Activated B cell treated with CpG ODN at 0.5 μM for 24 hours (primary cell): ENCODE measurements at regions of chr1 and their contacts with region 1.

Region 1: GRCh38 chr1:171485375-171486047 is at the start of gene PRRC2C:
- DNase-seq: peak; percentile 81
- ATAC-seq: peak; percentile 86
- H3K4me3 Mint-ChIP-seq: peak within 1 kb of the TSS; percentile 94
- H3K27ac Mint-ChIP-seq: peak within 1 kb of the TSS; percentile 94
- H3K4me1 Mint-ChIP-seq: peaks cover 56% of the 10 kb centered on the region
- H3K27me3 Mint-ChIP-seq: no peaks in the 10 kb centered on the region
- CTCF ChIP-seq: no peak
- total RNA-seq, gene PRRC2C: 262 and 272 TPM in 2 replicates

Region 2: GRCh38 chr1:169794530-169795416 is 1690.7 kb before region 1 on chr1 and contains the start of gene METTL18:
- CTCF ChIA-PET with region 1: no interaction called
- POLR2A ChIA-PET with region 1: no interaction called
- intact Hi-C with region 1: loop called (anchors 1 kb)
- DNase-seq: peak; percentile 77
- ATAC-seq: peak; percentile 98
- H3K4me3 Mint-ChIP-seq: peak within 1 kb of the TSS; percentile 100
- H3K27ac Mint-ChIP-seq: peak within 1 kb of the TSS; percentile 99
- H3K4me1 Mint-ChIP-seq: peaks cover 50% of the 10 kb centered on the region
- H3K27me3 Mint-ChIP-seq: no peaks in the 10 kb centered on the region
- CTCF ChIP-seq: no peak
- total RNA-seq, gene METTL18: 12.0 and 14.5 TPM in 2 replicates

Region 3: DNA sequence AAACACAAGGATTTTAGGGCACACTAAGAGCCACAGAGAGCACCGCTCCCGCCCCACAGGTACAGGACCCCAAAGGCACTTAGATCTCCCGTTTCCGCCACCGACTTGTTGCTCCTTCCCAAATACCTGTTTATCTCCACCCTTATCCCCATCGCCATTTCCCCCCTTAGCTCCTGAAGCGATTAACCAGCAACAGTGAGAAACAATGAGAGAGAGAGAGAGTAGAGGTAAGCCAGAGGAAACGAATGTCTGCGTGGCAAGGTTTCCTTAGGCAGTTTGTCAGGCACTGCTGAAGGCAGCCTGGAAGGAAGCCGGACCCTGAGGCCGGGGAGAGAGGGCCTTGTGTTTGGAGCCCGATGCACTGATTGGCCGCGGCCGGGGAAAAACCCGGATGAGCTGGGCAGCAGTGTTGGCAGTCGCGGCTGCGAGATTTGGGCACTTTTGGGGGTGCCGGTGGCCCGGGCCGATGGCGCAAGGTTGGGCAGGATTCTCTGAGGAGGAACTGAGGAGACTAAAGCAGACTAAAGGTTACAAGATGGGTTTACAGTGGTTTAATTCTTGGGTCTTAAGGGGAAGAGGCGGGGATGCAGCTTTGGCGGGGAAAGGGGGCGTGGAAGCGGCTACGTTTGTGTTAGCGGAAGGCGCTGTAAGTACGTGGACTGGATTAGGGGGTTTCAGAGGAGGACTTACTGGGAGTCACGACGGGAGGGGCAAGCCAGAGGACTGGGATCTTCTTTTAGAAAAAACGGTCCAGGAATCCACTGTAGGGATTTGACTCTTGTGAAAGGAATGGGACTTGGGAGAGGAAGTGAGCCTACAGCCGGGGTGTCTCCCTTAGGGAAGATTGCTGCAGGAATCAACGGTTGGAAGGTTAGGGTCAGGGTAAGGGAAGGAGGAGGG is 953.5 kb before region 1 on chr1 and contains the start of gene GORAB:
- CTCF ChIA-PET with region 1: no interaction called
- POLR2A ChIA-PET with region 1: interaction called, 4 read pairs
- intact Hi-C with region 1: loop called (anchors 1 kb)
- DNase-seq: peak; percentile 77
- ATAC-seq: peak; percentile 98
- H3K4me3 Mint-ChIP-seq: no peak within 1 kb of the TSS
- H3K27ac Mint-ChIP-seq: no peak within 1 kb of the TSS
- H3K4me1 Mint-ChIP-seq: peaks cover 13% of the 10 kb centered on the region
- H3K27me3 Mint-ChIP-seq: peaks cover 4% of the 10 kb centered on the region
- CTCF ChIP-seq: no peak
- total RNA-seq, gene GORAB: 20.0 and 20.2 TPM in 2 replicates

Region 4: GRCh38 chr1:171506525-171507304 is 21.2 kb after region 1 on chr1:
- CTCF ChIA-PET with region 1: interaction called, 8 read pairs
- POLR2A ChIA-PET with region 1: interaction called, 14 read pairs
- intact Hi-C with region 1: loop called (anchors 2 kb)
- DNase-seq: no peak
- ATAC-seq: no peak
- H3K4me3 Mint-ChIP-seq: peak overlapping the region; percentile 20
- H3K27ac Mint-ChIP-seq: peak overlapping the region; percentile 59
- H3K4me1 Mint-ChIP-seq: peaks cover 91% of the 10 kb centered on the region
- H3K27me3 Mint-ChIP-seq: no peaks in the 10 kb centered on the region
- CTCF ChIP-seq: no peak

Region 5: DNA sequence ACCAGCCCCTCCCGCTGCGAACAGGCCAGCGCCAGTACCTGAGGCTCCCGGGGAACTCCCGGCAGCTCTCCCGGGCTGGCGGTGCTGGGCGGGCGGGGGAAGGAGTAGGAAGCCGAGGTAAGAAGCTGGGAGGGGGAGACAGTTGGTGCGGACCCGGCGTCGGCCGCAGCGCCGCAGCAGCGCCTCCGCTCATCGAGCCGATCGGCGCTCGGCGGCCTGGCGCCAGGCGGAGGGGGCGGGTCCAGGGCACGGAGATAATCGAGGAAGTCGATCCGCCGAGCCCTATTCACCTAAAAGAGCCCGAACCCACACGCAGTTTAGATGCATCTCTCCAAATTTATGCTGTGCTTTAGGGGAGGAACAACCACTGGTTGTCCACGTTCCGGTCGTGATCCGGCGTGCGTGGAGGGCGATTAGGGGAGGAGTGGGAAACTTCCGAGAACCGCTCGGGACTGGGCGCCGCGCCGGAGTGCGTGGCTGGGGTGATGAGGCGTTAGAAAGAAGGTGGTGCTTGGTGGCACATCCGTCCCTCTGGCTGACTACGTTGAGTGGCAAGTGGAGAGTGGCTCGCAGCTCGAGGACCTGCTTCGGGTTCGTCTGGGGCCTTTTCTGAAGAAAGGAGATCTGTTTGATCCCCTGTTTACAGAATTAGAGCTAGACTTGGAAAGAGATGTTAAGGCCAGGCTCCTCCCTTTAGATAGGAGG is 256.5 kb after region 1 on chr1 and contains the start of gene VAMP4:
- CTCF ChIA-PET with region 1: interaction called, 3 read pairs
- POLR2A ChIA-PET with region 1: interaction called, 7 read pairs
- intact Hi-C with region 1: loop called (anchors 1 kb)
- DNase-seq: peak; percentile 82
- ATAC-seq: peak; percentile 93
- H3K4me3 Mint-ChIP-seq: peak within 1 kb of the TSS; percentile 100
- H3K27ac Mint-ChIP-seq: peak within 1 kb of the TSS; percentile 100
- H3K4me1 Mint-ChIP-seq: peaks cover 37% of the 10 kb centered on the region
- H3K27me3 Mint-ChIP-seq: no peaks in the 10 kb centered on the region
- CTCF ChIP-seq: no peak
- total RNA-seq, gene VAMP4: 9.0 and 10.5 TPM in 2 replicates

Region 6: GRCh38 chr1:171984850-171985485 is 499.5 kb after region 1 on chr1:
- CTCF ChIA-PET with region 1: no interaction called
- POLR2A ChIA-PET with region 1: no interaction called
- intact Hi-C with region 1: loop called (anchors 1 kb)
- DNase-seq: no peak
- ATAC-seq: no peak
- H3K4me3 Mint-ChIP-seq: no peak overlapping the region
- H3K27ac Mint-ChIP-seq: no peak overlapping the region
- H3K4me1 Mint-ChIP-seq: no peaks in the 10 kb centered on the region
- H3K27me3 Mint-ChIP-seq: no peaks in the 10 kb centered on the region
- CTCF ChIP-seq: peak; percentile 59